SK-N-SH (cell line): ENCODE measurements at regions of chr7 and their contacts with region 1.

Region 1: DNA sequence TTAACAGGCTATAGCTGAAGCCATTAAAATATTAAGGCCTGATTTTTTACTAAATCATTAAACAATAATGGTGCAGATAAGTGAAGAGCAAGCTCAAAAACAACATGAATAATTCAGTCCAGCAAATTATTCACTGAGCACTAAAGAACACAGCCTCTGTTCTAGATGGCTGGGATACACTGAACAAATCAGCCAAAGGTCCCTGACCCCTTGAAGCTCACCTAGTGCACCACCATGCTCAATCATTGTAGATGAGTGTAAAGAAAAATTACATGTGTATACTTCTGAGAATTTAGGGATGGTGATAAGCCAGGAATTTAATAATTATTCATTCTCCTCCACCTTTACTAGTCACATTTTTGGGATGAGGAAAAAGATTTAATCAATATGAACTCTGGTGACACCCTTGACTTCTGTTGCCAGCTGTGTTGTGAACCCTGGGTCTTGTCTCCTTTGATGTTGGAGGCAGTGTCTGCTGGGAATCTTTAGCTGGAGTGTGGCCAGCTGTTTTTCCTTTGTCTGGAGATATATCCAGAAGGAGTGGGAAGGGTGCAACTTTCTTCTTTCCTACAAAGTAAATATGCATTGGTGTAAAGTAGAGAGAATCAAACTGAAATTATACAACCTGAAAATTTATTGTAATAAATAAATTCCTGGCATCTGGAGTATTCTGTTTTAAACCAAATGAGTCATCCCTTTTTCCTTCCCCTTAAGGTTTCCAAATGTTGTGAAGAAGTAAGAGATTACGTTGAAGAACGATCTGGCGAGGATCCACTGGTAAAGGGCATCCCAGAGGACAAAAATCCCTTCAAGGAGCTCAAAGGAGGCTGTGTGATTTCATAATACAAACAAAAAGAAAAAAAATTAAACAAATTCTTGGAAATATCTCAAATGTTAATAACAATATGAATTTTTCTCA is 4.0 kb downstream of the GNGT1 start:
- DNase-seq: no peak
- H3K4me3 ChIP-seq: no peak overlapping the region
- H3K27ac ChIP-seq: no peak overlapping the region
- H3K4me1 ChIP-seq: peaks cover 4 to 5% of the 10 kb centered on the region in 2 experiments; a peak in 3 of 4 replicates
- H3K27me3 ChIP-seq: no peaks in the 10 kb centered on the region
- CTCF ChIP-seq: no peak
- EP300 ChIP-seq: peak in 1 of 2 experiments; percentile 38; a peak in 1 of 4 replicates
- RAD21 ChIP-seq: no peak

Region 2: DNA sequence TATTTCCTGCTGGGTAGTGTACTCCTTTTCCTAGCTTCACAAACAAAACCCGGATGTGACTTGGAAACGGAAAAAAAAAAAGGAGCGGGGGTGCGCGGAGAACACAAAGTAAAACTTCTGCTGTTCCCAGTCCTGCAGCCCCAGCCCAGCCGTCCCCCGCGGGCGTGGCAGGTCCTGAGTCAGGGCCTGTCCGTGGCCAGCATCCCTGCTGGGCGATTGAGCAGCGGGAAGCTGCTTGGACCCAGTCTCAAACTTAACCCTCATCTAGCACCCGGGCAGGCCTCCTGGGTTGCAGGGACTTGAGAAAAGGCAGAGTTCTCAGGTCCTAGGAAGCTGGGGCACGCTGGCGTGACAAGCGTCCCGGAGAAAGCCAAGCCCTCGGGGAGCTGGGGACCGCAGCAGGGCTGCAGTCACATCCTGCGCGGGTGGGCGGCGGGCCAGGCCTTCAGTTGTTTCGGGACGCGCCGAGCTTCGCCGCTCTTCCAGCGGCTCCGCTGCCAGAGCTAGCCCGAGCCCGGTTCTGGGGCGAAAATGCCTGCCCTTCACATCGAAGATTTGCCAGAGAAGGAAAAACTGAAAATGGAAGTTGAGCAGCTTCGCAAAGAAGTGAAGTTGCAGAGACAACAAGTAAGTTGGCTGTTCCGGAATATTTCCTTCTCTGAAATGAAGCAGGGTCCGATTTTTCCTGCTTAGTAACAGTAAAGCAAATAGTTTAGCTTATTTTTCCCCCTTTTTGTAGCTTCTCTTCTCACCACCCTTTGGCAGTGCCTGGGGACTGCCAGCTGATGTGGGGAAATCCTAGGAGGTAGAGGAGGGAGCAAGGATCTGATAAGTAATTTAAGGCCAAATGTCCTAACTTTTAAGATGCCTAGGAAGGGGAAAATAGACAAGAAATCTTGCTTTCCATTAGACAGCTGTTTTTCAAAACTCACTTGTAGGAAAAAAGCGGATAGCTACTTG is 11.6 kb after region 1 on chr7 and contains the start of gene GNG11:
- CTCF ChIA-PET with region 1: interaction called, 11 read pairs
- POLR2A ChIA-PET with region 1: interaction called, 3 read pairs
- DNase-seq: peak; percentile 86
- H3K4me3 ChIP-seq: peak within 1 kb of the TSS; percentile 69 to 79
- H3K27ac ChIP-seq: peak within 1 kb of the TSS; percentile 78 to 98
- H3K4me1 ChIP-seq: peaks cover 14 to 25% of the 10 kb centered on the region in 2 experiments; a peak in 3 of 4 replicates
- H3K27me3 ChIP-seq: no peaks in the 10 kb centered on the region
- CTCF ChIP-seq: no peak
- EP300 ChIP-seq: 0 out of 4 replicates have a peak, but pooled peaks of 1 of the 2 experiments have one; percentile 32
- RAD21 ChIP-seq: peak; percentile 54
- polyA plus RNA-seq, gene GNG11: 9.8 and 11.5 TPM in 2 replicates